A549 (cell line): ENCODE measurements at regions of chr5 and their contacts with region 1.

Region 1: GRCh38 chr5:32628048-32628803 is 42.9 kb downstream of the SUB1 start:
- DNase-seq: peak in 1 of 2 experiments; percentile 36
- ATAC-seq: peak; percentile 40 to 44; a peak in 3 of 6 replicates
- H3K4me3 ChIP-seq: no peak overlapping the region
- H3K27ac ChIP-seq: no peak overlapping the region
- H3K4me1 ChIP-seq: 0 out of 3 replicates have a peak, but pooled peaks cover 2% of the 10 kb centered on the region
- CTCF ChIP-seq: 0 out of 3 replicates have a peak, but pooled peaks have one; percentile 13
- EP300 ChIP-seq: no peak
- POLR2A ChIP-seq: no peak
- RAD21 ChIP-seq: peak; percentile 31 to 46; a peak in 3 of 5 replicates

Region 2: DNA sequence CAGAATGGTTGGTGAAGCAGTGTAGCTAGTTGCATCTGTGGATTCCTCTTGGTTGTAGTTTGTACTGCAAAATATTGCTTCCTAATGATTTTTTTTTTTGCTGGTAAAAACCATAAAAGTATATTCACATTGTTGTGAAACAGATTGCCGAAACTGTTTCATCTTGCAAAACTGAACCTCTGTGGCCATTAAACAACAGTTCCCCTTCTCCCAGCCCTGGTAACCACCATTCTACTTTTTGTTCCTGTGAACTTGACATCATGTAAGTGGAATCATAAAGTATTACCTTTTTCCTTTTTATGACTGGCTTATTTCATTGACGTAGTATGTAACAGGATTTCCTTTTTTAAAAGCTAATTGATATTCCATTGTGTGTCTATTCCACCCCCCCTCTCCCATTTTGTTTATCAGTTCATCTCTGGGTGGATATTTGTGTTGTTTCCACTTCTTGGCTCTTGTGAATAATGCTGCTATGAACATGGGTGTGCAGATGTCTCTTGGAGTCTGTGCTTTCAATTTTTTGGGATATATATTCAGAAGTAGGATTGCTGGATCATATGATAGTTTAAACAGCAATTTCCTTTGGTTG is 31.1 kb before region 1 on chr5:
- CTCF ChIA-PET with region 1: no interaction called
- POLR2A ChIA-PET with region 1: no interaction called
- DNase-seq: no peak
- ATAC-seq: no peak
- H3K4me3 ChIP-seq: no peak overlapping the region
- H3K27ac ChIP-seq: no peak overlapping the region
- H3K4me1 ChIP-seq: peaks cover 29% of the 10 kb centered on the region
- CTCF ChIP-seq: no peak
- EP300 ChIP-seq: no peak
- POLR2A ChIP-seq: no peak
- RAD21 ChIP-seq: no peak

Region 3: DNA sequence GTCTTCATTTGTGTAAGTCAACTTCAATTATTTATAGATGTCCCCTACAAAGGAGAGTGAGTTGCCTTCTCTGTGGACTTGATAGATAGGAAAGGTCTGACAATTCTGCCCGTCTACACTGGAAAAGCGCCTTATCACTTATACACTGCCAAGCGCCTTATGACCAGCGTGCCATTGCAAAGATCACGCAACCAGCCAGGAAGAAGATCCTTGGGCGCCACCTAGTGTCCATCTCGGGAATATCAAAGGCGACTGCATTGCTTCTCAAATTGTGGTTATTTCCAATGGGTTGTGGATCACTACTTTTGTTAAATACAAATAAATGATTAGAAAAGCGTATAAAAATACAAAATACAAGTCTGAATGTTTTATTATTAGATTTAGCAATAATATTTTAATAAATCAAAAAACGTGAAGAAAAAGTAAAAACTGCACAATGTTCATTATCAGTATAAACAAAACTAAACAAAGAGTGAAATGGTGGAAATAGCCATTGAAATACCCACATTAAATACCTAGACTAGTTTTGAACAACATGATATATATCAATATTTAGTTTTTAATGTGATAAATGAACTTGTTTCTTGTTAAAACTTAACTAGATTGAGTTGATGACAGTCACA is 15.1 kb before region 1 on chr5:
- CTCF ChIA-PET with region 1: interaction called, 11 read pairs
- POLR2A ChIA-PET with region 1: no interaction called
- DNase-seq: peak; percentile 76 to 77
- ATAC-seq: peak; percentile 72 to 87; a peak in 5 of 6 replicates
- H3K4me3 ChIP-seq: no peak overlapping the region
- H3K27ac ChIP-seq: no peak overlapping the region
- H3K4me1 ChIP-seq: no peaks in the 10 kb centered on the region
- CTCF ChIP-seq: peak; percentile 92
- EP300 ChIP-seq: no peak
- POLR2A ChIP-seq: no peak
- RAD21 ChIP-seq: peak; percentile 92 to 93

Region 4: GRCh38 chr5:32687167-32687831 is 59.1 kb after region 1 on chr5:
- CTCF ChIA-PET with region 1: no interaction called
- POLR2A ChIA-PET with region 1: no interaction called
- DNase-seq: no peak
- ATAC-seq: no peak
- H3K4me3 ChIP-seq: no peak overlapping the region
- H3K27ac ChIP-seq: peak overlapping the region; percentile 42 to 67; a peak in 5 of 6 replicates
- H3K4me1 ChIP-seq: peaks cover 26% of the 10 kb centered on the region; the same call in 2 of the 3 replicates
- CTCF ChIP-seq: no peak
- EP300 ChIP-seq: no peak
- POLR2A ChIP-seq: no peak
- RAD21 ChIP-seq: no peak